Activated CD4-positive, alpha-beta T cell treated with anti-CD3 and anti-CD28 coated beads, Interleukin-2, amount 10 ng/mL, durations not matched to agents 24 days and 14 days (primary cell): ENCODE measurements at regions of chr7 and their contacts with region 1.

Region 1: DNA sequence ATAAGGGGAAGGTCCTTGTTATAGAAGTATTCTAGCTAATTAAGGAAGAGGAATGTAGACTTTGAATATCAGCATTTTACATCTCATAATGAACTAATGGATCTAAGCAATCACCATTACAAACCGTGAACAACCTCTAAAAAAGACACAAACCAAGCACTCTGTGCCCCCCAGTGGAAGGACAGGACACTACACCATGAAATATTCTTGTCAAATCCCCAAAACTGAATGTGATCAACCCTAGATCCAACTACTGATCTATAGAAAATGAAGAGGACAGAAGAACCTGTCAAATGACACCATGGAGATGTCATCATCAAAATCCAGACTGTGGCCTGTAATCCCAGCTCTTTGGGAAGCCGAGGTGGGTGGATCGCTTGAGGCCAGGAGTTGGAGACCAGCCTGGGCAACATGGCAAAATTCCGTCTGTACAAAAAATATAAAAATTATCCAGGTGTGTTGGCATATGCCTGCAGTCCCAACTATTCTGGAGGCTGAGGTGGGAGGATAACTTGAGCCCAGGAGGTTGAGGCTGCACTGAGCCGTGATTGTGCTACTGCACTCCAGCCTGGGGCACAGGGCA is 111.3 kb upstream of the CARD11 start:
- DNase-seq: peak; percentile 89
- H3K4me3 Mint-ChIP-seq: no peak overlapping the region
- H3K27ac Mint-ChIP-seq: no peak overlapping the region
- H3K4me1 Mint-ChIP-seq: peaks cover 18% of the 10 kb centered on the region
- H3K27me3 Mint-ChIP-seq: peaks cover 4% of the 10 kb centered on the region

Region 2: GRCh38 chr7:2886900-2887299 is 268.1 kb before region 1 on chr7:
- intact Hi-C with region 1: loop called (anchors 1 kb)
- DNase-seq: peak; percentile 87
- H3K4me3 Mint-ChIP-seq: no peak overlapping the region
- H3K27ac Mint-ChIP-seq: peak overlapping the region; percentile 3
- H3K4me1 Mint-ChIP-seq: peaks cover 7% of the 10 kb centered on the region
- H3K27me3 Mint-ChIP-seq: peaks cover 1% of the 10 kb centered on the region

Region 3: DNA sequence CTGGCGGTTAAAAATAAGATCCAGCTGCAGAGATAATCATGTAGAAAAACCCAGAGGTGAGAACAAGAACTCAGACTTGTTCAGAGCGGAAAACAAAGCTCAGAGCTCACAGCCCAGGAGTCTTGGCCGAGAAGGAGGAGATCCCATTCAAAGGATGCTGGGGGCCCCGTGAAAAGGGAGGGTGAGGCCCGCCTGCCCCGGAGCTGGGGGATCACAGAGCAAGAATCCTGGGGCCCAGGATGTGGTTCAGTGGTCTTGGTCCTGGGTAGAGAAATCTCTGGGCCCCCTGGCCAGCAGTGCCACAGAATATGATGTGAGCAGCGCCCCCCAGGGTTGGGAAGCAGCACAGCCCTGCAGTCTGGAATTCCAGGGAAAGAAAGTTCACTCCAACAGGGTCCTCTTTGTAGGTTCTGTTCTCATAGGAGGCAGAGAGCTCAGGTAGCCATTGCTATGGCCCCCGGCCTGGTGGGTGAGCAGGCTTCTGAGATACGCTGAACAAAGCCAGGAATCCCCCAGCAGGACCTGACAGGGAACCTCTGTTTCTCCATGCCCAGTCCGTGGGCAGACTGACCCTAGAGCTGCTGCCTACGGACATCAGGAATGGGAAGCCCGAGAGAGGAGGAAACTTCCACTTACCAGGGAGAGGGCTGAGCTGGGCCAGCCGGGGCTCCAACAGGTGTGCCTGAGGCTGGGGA is 233.2 kb before region 1 on chr7:
- intact Hi-C with region 1: no loop called
- DNase-seq: no peak
- H3K4me3 Mint-ChIP-seq: no peak overlapping the region
- H3K27ac Mint-ChIP-seq: no peak overlapping the region
- H3K4me1 Mint-ChIP-seq: peaks cover 2% of the 10 kb centered on the region
- H3K27me3 Mint-ChIP-seq: no peaks in the 10 kb centered on the region

Region 4: DNA sequence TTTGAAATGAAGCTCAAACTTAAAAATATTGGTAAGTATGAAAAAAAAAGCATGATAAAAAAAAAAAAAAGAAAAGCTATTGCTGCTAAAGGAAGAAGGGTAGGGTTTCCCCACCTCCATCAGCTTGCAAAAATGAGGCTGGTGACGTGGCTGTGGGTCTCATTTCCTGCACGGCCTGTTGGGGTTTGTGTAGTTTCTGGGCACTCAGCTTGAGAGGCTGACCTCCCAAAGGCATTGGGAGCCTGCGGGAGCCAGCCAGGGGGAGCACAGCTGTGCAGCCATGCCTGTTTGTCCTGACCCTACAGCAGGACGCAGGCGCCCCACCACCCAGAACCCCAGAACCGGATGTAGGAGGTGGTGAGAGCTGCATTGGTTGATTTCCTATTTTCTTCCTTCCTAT is 62.5 kb before region 1 on chr7:
- intact Hi-C with region 1: loop called (anchors 1 kb)
- DNase-seq: peak; percentile 93
- H3K4me3 Mint-ChIP-seq: peak overlapping the region; percentile 22
- H3K27ac Mint-ChIP-seq: peak overlapping the region; percentile 86
- H3K4me1 Mint-ChIP-seq: peaks cover 51% of the 10 kb centered on the region
- H3K27me3 Mint-ChIP-seq: no peaks in the 10 kb centered on the region

Region 5: GRCh38 chr7:3117488-3118231 is 37.3 kb before region 1 on chr7:
- intact Hi-C with region 1: loop called (anchors 5 kb)
- DNase-seq: peak; percentile 70
- H3K4me3 Mint-ChIP-seq: peak overlapping the region; percentile 79
- H3K27ac Mint-ChIP-seq: peak overlapping the region; percentile 83
- H3K4me1 Mint-ChIP-seq: peaks cover 56% of the 10 kb centered on the region
- H3K27me3 Mint-ChIP-seq: peaks cover 4% of the 10 kb centered on the region

Region 6: DNA sequence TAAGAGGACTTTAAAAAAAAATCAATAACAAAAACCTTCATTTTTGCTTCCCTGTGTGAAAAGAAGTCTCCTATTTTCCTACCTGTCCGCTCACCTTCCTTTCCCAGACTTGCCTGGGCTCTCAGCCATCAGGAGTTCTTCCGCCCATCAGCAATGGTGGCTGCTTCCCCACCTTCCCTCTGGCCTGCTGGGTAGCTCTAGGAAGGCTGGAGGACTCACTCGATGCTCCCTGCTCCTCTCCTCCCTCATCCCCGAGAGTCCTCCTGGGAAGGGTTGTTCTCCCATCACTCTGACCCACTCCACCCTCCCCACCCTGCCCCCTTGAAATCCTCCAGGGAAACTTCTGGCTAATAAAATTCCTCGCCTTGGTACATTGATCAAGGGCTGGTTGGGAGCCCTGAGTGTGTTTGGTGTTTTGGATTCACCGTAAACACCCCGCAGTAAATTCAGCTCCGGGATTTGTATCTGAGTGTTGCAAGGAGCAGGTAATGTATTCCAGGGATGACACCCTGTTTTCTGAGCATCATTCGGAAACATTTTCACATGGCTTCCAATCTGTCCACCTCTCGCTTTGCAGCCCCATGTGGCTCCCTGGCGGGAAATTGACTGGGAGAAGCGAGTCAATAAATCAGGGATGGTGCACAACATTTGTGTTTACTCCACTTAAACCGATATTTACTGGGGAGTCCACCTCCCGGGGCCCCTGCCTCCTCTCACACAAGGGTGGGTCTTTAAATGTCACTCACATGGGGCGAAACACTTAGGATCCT is 19.7 kb after region 1 on chr7:
- intact Hi-C with region 1: no loop called
- DNase-seq: no peak
- H3K4me3 Mint-ChIP-seq: no peak overlapping the region
- H3K27ac Mint-ChIP-seq: peak overlapping the region; percentile 34
- H3K4me1 Mint-ChIP-seq: no peaks in the 10 kb centered on the region
- H3K27me3 Mint-ChIP-seq: peaks cover 1% of the 10 kb centered on the region